Right ventricle myocardium inferior (tissue), 1 donor: ENCODE measurements at regions of chr16 and their contacts with region 1.

Region 1: DNA sequence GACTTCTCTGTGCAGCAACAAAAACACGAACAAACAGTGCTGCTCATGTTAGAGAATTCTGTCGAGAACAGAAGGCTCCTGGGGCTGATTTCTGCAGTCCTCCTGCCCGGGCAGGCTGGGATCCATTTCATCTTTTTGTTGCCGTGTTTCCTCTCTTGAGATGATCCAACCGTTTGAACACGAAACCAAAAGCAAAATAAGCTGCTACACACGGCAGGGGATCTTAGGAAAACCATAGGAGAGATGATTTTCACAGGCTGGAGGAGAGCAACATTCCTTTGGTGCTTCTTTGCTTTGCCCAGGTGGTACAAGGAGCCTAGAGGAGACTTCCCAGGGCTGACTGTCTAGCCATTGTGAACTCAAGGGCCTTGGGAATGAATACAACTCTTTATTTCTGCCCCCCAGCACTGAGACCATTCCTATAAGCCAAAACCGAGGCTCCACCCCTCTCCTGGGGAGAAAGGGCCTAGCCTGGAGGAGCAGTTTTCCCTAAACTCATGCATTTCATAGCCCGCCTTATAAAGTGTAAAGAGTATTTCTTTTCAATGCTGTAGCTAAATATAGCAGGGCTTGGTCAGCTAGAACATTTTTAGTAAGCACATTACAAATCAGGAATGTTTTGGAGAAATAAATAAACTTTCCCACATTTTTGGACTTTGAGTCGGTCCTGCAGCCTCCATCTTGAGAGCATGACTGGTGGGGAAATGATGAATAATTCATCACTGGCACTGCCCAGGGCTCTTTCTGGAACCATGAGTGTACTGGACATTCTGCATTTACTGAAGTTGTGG is 7.7 kb downstream of the FOXL1 start:
- DNase-seq: no peak
- ATAC-seq: peak; percentile 28

Region 2: GRCh38 chr16:86531191-86531545 is 54.8 kb before region 1 on chr16:
- intact Hi-C with region 1: loop called (anchors 2 kb)
- DNase-seq: peak; percentile 89
- ATAC-seq: peak; percentile 81